ENCODE measurements at regions of chr11 and their contacts with region 1.

Region 1: DNA sequence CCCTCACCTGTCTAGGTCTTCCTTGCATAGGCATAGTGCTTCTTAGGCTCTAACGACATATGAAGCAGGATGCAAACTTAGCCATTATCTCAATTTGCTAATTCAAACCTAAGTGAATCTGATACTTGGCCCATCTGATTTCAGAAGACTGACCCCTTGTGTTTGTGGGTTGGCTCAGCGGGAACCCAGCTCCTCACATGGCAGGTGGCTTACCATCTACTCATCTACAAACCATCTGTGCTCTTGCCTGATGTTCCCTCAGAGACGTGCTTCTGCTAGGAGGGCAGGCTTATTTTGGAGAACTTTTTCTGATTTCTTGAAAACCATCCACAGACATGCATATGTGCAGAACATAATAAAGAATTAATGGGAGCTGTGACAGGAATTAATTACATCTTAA is 15.2 kb downstream of the ELMOD1 start:
- DNase-seq: no peak
- H3K4me3 ChIP-seq: no peak overlapping the region
- H3K27ac ChIP-seq: no peak overlapping the region
- H3K4me1 ChIP-seq: peaks cover 0 to 3% (median 0%) of the 10 kb centered on the region in 4 experiments; a peak in 2 of 7 replicates
- H3K27me3 ChIP-seq: peaks cover 0 to 5% (median under 1%) of the 10 kb centered on the region in 4 experiments; a peak in 2 of 7 replicates
- CTCF ChIP-seq: peak; percentile 29 to 55 (median 42); a peak in 3 of 4 replicates
- EP300 ChIP-seq: no peak
- POLR2A ChIP-seq: no peak
- RAD21 ChIP-seq: peak; percentile 5 to 11; a peak in 1 of 4 replicates

Region 2: GRCh38 chr11:107573438-107573837 is 32.7 kb before region 1 on chr11:
- CTCF ChIA-PET with region 1: interaction called, 28 read pairs
- POLR2A ChIA-PET with region 1: no interaction called
- DNase-seq: no peak
- H3K4me3 ChIP-seq: no peak overlapping the region
- H3K27ac ChIP-seq: no peak overlapping the region
- H3K4me1 ChIP-seq: peaks cover 0 to 4% (median 2%) of the 10 kb centered on the region in 4 experiments; a peak in 1 of 7 replicates
- H3K27me3 ChIP-seq: no peaks in the 10 kb centered on the region
- CTCF ChIP-seq: no peak
- EP300 ChIP-seq: no peak
- POLR2A ChIP-seq: no peak
- RAD21 ChIP-seq: no peak

Measured in H1 (cell line).